ENCODE measurements at regions of chr2 and their contacts with region 1.

Region 1: DNA sequence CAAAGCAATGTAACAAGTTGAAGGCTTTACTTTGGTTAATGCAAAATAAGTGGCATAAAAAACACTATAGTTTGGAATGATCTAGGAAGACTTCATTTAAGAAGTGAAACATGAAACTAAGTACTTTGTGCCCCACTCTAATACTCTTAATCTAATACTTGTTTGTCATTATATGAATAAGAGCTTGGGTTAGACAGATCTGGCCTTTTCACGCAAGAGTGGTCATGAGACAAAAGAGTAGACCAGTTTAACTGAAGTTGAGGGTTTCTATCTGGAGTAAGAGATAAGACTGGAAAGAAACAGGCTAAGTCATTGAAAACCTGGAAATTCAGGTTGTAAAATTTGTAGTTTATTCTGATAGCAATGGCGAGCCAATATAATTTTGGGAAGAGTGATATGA is 2.8 kb downstream of the SLC30A6 start:
- DNase-seq: no peak
- H3K4me3 Mint-ChIP-seq: no peak overlapping the region
- H3K27ac Mint-ChIP-seq: no peak overlapping the region
- H3K4me1 Mint-ChIP-seq: peaks cover 44% of the 10 kb centered on the region
- H3K27me3 Mint-ChIP-seq: no peaks in the 10 kb centered on the region

Region 2: GRCh38 chr2:31831585-31831984 is 336.9 kb before region 1 on chr2:
- intact Hi-C with region 1: no loop called
- DNase-seq: no peak
- H3K4me3 Mint-ChIP-seq: no peak overlapping the region
- H3K27ac Mint-ChIP-seq: no peak overlapping the region
- H3K4me1 Mint-ChIP-seq: no peaks in the 10 kb centered on the region
- H3K27me3 Mint-ChIP-seq: no peaks in the 10 kb centered on the region

Region 3: DNA sequence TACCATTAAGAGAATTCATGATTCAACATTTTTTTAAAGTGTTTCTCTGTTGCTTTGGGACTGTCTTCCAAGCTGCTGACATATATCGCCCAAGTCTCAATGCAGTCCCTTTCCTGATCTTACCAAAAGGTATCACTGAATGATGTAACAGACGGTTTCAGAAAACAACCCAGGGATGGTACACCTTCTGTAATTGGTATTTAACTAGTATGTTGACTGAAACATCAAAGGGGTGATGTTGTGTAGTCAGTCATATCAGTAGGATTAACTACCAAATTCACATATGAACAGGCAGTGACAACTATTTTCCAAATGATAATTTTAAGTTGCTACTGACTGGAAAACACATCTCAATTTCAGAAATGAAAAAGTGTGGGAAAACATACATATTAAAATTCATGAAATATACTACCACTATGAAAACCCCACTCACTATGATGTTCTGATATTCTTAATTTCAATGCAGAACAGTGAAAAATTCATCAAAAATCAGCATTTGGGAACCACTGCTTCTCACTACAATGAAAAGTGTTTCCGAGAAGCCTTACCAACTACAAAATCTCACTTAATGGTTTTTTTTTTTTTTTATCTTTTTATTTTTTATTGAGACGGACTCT is 217.5 kb before region 1 on chr2:
- intact Hi-C with region 1: loop called (anchors 5 kb)
- DNase-seq: no peak
- H3K4me3 Mint-ChIP-seq: no peak overlapping the region
- H3K27ac Mint-ChIP-seq: no peak overlapping the region
- H3K4me1 Mint-ChIP-seq: peaks cover 16% of the 10 kb centered on the region
- H3K27me3 Mint-ChIP-seq: no peaks in the 10 kb centered on the region

Region 4: GRCh38 chr2:32039447-32040219 is 128.9 kb before region 1 on chr2 and contains the start of gene DPY30:
- intact Hi-C with region 1: loop called (anchors 1 kb)
- DNase-seq: peak; percentile 86
- H3K4me3 Mint-ChIP-seq: peak within 1 kb of the TSS; percentile 93
- H3K27ac Mint-ChIP-seq: peak within 1 kb of the TSS; percentile 93
- H3K4me1 Mint-ChIP-seq: peaks cover 17% of the 10 kb centered on the region
- H3K27me3 Mint-ChIP-seq: peaks cover 1% of the 10 kb centered on the region
- total RNA-seq, gene DPY30: 64.6 and 72.5 TPM in 2 replicates

Region 5: GRCh38 chr2:32277674-32278482 is 109.4 kb after region 1 on chr2 and contains the start of gene YIPF4:
- intact Hi-C with region 1: loop called (anchors 1 kb)
- DNase-seq: peak; percentile 84
- H3K4me3 Mint-ChIP-seq: peak within 1 kb of the TSS; percentile 89
- H3K27ac Mint-ChIP-seq: peak within 1 kb of the TSS; percentile 85
- H3K4me1 Mint-ChIP-seq: peaks cover 13% of the 10 kb centered on the region
- H3K27me3 Mint-ChIP-seq: peaks cover 4% of the 10 kb centered on the region
- total RNA-seq, gene YIPF4: 39.4 and 42.9 TPM in 2 replicates

Region 6: DNA sequence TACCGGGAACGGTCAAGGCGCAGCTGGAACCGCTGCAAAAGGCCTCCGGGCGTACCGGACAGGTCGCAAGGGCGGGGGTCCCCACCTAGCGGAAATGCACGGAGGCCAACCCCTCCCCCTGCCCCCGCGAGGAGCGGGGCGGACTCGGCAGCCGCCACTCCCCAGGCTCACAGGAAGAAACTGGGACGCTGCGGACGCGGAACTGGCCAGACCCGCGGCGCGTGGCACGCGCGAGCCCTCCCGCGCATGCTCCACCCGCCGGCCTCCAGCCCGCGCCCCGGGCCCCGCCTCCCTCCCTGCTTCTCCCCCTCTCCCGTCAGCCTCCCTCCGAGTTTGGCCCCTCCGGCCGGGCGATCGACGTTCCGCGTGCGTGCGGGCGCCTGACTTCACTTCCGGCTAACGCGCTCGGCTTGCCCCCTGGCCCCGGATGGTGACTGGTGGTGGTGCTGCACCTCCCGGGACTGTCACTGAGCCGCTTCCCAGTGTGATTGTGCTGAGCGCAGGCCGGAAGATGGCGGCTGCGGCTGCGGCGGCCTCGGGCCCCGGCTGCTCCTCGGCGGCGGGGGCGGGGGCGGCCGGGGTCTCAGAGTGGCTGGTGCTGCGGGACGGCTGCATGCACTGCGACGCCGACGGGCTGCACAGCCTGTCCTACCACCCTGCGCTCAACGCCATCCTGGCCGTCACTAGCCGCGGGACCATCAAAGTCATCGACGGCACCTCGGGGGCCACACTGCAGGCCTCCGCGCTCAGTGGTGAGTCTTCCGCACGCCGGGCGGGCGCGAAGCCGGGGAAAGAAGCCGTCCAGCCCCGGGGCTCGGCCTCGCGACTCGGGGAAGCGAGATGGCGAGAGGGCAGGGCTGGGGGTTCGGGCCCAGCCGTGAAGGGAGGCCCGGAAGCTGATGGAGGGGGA is 188.5 kb after region 1 on chr2 and contains the start of gene BIRC6:
- intact Hi-C with region 1: loop called (anchors 1 kb)
- DNase-seq: peak; percentile 92
- H3K4me3 Mint-ChIP-seq: peak within 1 kb of the TSS; percentile 89
- H3K27ac Mint-ChIP-seq: peak within 1 kb of the TSS; percentile 96
- H3K4me1 Mint-ChIP-seq: peaks cover 40% of the 10 kb centered on the region
- H3K27me3 Mint-ChIP-seq: no peaks in the 10 kb centered on the region
- total RNA-seq, gene BIRC6: 112 and 123 TPM in 2 replicates